Activated CD8-positive, alpha-beta memory T cell treated with anti-CD3 and anti-CD28 coated beads, Interleukin-2, amount 10 ng/mL, durations not matched to agents 7 days and 5 days (primary cell): ENCODE measurements at regions of chr13 and their contacts with region 1.

Region 1: DNA sequence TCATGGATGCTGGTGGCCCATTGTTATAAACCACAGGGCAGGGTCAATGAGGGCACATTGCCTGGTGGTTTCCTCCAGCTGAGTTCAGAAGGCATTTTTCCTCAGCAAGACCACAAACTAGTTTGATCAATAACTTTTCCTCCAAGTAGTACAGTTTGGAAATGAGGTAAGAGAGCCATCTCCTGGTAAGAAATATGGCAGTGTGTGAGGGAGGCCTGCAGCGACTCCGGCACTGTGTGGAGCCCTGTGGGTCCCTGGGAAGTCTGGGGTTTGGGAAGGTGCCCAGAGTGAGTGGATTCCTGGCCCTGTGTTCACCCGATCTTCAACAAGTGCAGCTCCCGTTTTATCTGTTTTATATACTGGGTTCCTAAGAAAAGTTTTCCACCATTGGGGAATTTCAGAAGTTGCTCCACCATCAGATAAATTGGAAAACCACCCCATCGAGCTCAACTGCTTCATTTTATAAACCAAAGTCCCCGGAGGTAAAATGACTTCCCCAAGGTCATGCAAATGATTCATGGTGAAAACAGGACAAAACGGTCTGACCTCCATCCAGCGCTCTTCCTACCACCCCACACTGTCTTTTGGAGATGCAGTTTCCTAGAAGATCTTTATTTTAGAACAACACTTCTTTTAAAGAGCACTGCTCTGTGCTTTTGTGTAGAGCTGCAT is 148.4 kb downstream of the KATNAL1 start:
- DNase-seq: no peak
- ATAC-seq: peak; percentile 52
- H3K4me3 Mint-ChIP-seq: no peak overlapping the region
- H3K27ac Mint-ChIP-seq: peak overlapping the region; percentile 24
- H3K4me1 Mint-ChIP-seq: peaks cover 37% of the 10 kb centered on the region
- H3K27me3 Mint-ChIP-seq: no peaks in the 10 kb centered on the region

Region 2: DNA sequence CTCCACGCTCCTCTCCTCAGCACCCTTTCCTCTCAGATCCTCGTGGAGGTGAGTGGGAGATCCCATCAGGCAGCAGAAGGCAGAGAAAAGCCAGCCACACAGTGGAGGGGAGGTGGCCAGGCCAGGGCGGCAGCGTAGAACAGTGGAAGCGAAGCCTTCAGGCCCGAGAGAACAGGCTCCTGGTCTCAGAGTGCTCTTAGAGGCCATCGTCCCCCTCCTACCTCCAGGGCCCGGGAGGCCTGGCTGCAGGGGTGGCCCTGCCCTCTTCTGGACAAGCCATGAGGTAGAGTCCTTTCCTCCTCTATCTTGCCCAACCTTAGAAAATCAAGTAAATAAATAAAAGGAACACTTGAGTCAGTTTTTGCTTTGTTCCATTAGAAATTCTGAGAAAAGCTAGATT is 53.5 kb before region 1 on chr13:
- CTCF ChIA-PET with region 1: no interaction called
- DNase-seq: no peak
- ATAC-seq: no peak
- H3K4me3 Mint-ChIP-seq: no peak overlapping the region
- H3K27ac Mint-ChIP-seq: no peak overlapping the region
- H3K4me1 Mint-ChIP-seq: no peaks in the 10 kb centered on the region
- H3K27me3 Mint-ChIP-seq: peaks cover 5% of the 10 kb centered on the region

Region 3: GRCh38 chr13:30125422-30126073 is 33.4 kb before region 1 on chr13:
- CTCF ChIA-PET with region 1: interaction called, 185 read pairs
- DNase-seq: no peak
- ATAC-seq: no peak
- H3K4me3 Mint-ChIP-seq: no peak overlapping the region
- H3K27ac Mint-ChIP-seq: no peak overlapping the region
- H3K4me1 Mint-ChIP-seq: peaks cover 22% of the 10 kb centered on the region
- H3K27me3 Mint-ChIP-seq: no peaks in the 10 kb centered on the region

Region 4: DNA sequence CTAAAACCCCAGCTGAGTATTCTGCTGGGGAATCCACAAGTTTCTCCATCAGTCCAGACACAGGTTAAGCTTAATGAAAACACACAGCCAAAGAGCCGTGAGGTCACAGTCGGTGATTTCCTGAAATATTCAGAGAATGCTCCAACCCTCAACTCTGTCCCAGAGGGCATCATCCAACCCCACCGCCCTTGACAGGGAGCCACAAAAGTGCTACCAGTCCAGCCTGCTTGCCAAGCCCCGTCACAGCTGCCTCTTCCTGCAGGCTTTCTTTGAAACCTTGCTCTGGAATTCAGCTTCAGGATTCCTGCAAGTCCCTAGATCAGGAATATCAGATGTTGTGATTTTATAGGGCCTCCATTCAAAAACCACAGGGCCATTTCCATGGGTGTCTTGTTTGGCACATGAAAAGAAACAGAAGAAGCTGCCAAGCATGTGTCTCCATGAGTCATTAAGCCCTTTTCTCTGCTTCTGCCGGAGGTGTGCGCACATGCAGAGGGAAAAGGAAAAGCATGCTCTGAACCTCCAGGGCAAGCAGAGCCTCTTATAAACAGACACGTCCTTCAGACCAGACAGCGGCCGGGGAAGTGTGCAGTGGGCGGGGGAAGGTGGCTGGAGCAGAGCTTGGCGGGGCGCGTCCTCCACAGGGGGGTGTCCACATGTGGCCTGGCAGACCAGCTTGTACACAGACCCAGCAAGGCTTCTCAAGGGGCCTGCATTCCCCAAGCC is 16.3 kb before region 1 on chr13:
- CTCF ChIA-PET with region 1: interaction called, 185 read pairs
- DNase-seq: no peak
- ATAC-seq: no peak
- H3K4me3 Mint-ChIP-seq: no peak overlapping the region
- H3K27ac Mint-ChIP-seq: peak overlapping the region; percentile 44
- H3K4me1 Mint-ChIP-seq: peaks cover 54% of the 10 kb centered on the region
- H3K27me3 Mint-ChIP-seq: no peaks in the 10 kb centered on the region